PC-3 (cell line): ENCODE measurements at regions of chr4 and their contacts with region 1.

Region 1: GRCh38 chr4:74531963-74532794 is 87.2 kb downstream of the AREG start:
- DNase-seq: peak; percentile 85
- ATAC-seq: peak; percentile 66
- H3K4me3 ChIP-seq: no peak overlapping the region
- H3K27ac ChIP-seq: peak overlapping the region; percentile 87
- H3K4me1 ChIP-seq: peaks cover 58% of the 10 kb centered on the region
- H3K27me3 ChIP-seq: no peaks in the 10 kb centered on the region
- CTCF ChIP-seq: peak; percentile 85

Region 2: GRCh38 chr4:74320559-74321118 is 211.5 kb before region 1 on chr4:
- CTCF ChIA-PET with region 1: interaction called, 5 read pairs
- POLR2A ChIA-PET with region 1: no interaction called
- intact Hi-C with region 1: loop called (anchors 1 kb)
- DNase-seq: peak; percentile 95
- ATAC-seq: peak; percentile 90
- H3K4me3 ChIP-seq: peak overlapping the region; percentile 15; the same call in 1 of the 2 replicates
- H3K27ac ChIP-seq: peak overlapping the region; percentile 95
- H3K4me1 ChIP-seq: peaks cover 28% of the 10 kb centered on the region
- H3K27me3 ChIP-seq: no peaks in the 10 kb centered on the region
- CTCF ChIP-seq: peak; percentile 78

Region 3: GRCh38 chr4:74397748-74398426 is 134.3 kb before region 1 on chr4:
- CTCF ChIA-PET with region 1: no interaction called
- POLR2A ChIA-PET with region 1: no interaction called
- intact Hi-C with region 1: loop called (anchors 5 kb)
- DNase-seq: peak; percentile 23
- ATAC-seq: peak; percentile 43
- H3K4me3 ChIP-seq: peak overlapping the region; percentile 70
- H3K27ac ChIP-seq: peak overlapping the region; percentile 33
- H3K4me1 ChIP-seq: peaks cover 29% of the 10 kb centered on the region
- H3K27me3 ChIP-seq: no peaks in the 10 kb centered on the region
- CTCF ChIP-seq: no peak

Region 4: DNA sequence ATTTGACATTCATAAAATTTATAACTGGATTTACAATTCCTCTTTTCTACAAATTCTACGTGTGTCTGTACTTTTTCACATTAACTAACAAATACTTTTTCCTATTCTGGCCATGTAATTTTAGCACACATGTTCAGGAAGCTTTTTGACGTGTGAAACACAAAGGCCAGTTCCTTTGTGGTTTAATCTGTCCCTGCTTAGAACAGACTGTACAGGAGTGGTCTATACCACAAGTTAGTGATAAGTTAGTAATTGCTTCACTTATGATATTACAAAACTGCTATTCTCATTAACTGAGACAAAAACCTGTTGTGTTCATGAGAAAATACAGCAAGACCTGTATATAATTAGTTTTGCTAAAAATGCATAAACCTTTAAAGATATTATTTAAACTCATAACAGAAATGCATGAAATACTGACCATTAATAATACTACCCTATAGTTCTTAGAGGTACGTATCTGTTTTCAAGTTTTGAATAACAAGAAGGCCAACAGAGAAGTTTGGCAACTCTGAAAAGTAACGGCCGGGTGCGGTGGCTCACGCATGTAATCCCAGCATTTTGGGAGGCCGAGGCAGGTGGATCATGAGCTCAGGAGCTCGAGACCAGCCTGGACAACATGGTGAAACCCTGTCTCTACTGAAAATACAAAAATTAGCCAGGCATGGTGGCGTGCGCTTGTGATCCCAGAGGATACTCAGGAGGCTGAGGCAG is 100.9 kb before region 1 on chr4:
- CTCF ChIA-PET with region 1: no interaction called
- POLR2A ChIA-PET with region 1: no interaction called
- intact Hi-C with region 1: no loop called
- DNase-seq: no peak
- ATAC-seq: no peak
- H3K4me3 ChIP-seq: no peak overlapping the region
- H3K27ac ChIP-seq: no peak overlapping the region
- H3K4me1 ChIP-seq: peaks cover 29% of the 10 kb centered on the region
- H3K27me3 ChIP-seq: no peaks in the 10 kb centered on the region
- CTCF ChIP-seq: no peak

Region 5: DNA sequence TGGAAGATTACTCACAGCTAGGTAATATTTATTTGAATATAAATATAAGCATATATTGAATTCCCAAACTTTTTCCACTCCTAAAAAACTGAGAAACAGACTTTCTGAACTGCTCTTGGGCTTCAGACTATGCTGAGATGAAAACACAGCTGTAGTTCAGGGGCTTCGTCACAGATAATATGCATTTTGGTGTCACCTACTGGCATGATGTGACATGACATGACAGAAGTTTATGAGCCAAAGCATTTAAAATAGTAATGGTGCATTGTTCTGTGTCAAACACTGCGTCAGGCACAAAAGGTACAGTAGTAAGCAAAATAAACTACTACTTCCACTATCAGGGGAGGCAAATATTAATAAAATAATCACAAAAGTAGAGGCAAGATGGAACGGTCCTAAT is 90.9 kb after region 1 on chr4:
- CTCF ChIA-PET with region 1: interaction called, 4 read pairs
- POLR2A ChIA-PET with region 1: interaction called, 3 read pairs
- intact Hi-C with region 1: loop called (anchors 1 kb)
- DNase-seq: peak; percentile 77
- ATAC-seq: peak; percentile 6; the same call in 1 of the 2 replicates
- H3K4me3 ChIP-seq: no peak overlapping the region
- H3K27ac ChIP-seq: peak overlapping the region; percentile 100
- H3K4me1 ChIP-seq: peaks cover 92% of the 10 kb centered on the region
- H3K27me3 ChIP-seq: no peaks in the 10 kb centered on the region
- CTCF ChIP-seq: peak; percentile 78

Region 6: DNA sequence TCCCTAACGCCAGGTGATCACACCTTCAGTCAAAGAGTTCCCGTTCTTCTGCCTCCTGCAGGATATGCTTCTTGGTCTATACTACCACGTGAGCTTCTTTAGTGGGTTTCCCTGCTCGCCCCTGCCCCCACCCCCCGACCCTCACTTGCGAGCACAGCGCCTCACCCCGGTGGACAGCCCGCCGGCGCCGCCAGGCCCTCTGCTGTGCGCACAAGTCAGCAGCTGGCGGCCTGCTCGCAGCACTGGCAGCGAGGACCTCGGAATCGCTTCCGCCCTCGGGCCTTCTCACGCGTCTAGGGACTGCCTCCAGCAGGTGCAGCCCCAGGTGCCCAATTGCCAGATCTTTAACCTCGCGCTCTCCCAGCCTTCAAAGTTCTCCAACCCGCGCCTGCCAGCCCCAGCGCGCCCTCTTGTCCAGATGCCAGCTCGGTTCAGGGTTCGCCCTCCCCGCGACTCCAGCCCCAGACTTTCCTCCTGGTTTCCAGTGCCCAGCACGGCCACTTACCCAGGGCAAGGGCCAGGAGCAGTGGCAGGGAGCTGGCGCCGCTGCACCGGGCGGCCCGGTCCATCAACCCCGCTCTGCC is 261.7 kb after region 1 on chr4:
- CTCF ChIA-PET with region 1: no interaction called
- POLR2A ChIA-PET with region 1: no interaction called
- intact Hi-C with region 1: loop called (anchors 2 kb)
- DNase-seq: peak; percentile 63
- ATAC-seq: peak; percentile 82
- H3K4me3 ChIP-seq: peak overlapping the region; percentile 86
- H3K27ac ChIP-seq: peak overlapping the region; percentile 72
- H3K4me1 ChIP-seq: peaks cover 18% of the 10 kb centered on the region; the same call in 1 of the 2 replicates
- H3K27me3 ChIP-seq: no peaks in the 10 kb centered on the region
- CTCF ChIP-seq: peak; percentile 72